ENCODE measurements at regions of chr12 and their contacts with region 1.

Region 1: DNA sequence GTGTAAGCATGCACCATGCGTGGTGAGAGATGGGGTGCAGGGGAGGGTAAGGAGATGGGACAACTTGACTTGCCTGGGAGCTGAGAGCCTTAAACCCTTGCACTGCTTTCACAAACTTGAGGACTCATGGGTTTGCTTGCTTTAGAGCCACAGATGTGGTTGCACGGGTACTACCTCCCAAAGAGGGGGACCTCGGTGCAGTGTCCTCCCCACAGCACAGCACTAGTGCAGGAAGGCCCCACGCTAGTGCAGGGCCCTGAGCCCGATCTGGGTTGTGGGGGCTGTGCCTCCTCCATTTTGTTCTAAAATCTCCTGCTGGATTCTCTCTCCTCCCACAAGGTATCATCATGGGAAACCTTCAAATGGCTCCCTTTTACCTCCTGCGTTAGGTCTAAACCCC is 11.2 kb downstream of the KRT72 start:
- DNase-seq: no peak
- ATAC-seq: no peak
- H3K4me3 ChIP-seq: no peak overlapping the region
- H3K4me3 Mint-ChIP-seq: no peak overlapping the region
- H3K27ac ChIP-seq: no peak overlapping the region
- H3K27ac Mint-ChIP-seq: peak overlapping the region in 6 of 9 donors; percentile 40 to 87 (median 68)
- H3K4me1 ChIP-seq: peaks cover 0 to 39% of the 10 kb centered on the region in 2 donors
- H3K4me1 Mint-ChIP-seq: peaks cover 23 to 76% (median 58%) of the 10 kb centered on the region in 7 donors
- H3K27me3 ChIP-seq: no peaks in the 10 kb centered on the region
- H3K27me3 Mint-ChIP-seq: peaks cover 0 to 10% (median 0%) of the 10 kb centered on the region in 5 donors

Region 2: DNA sequence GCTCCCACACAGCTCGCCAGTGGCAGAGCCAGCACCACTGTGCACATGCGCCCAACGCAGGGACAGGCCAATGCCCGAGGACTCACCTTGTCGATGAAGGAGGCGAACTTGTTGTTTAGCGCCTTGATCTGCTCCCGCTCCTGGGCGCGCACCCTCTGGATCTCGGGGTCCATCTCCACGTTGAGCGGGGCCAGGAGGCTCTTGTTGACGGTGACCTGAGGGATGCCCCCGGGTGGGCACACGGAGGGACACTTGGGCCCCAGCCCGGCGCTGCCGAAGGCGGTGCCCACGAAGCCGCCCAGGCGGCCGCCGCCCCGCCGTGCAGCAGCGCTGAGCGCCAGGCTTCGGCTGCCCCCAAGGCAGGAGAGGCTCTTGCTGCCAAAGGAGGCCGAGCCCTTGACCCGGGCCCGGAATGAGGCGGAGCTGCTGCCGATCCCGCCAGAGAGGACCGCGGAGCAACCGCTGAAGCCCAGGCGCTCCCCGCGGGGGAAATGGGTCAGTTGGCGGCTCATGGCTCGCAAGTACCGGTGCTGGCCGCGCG is 11.0 kb after region 1 on chr12 and contains the start of gene KRT72:
- CTCF ChIA-PET with region 1: interaction called, 29 read pairs
- POLR2A ChIA-PET with region 1: interaction called, 15 read pairs
- intact Hi-C with region 1: no loop called
- DNase-seq: peak in 1 of 9 donors; percentile 12
- ATAC-seq: no peak
- H3K4me3 ChIP-seq: no peak within 1 kb of the TSS
- H3K4me3 Mint-ChIP-seq: peak within 1 kb of the TSS in 6 of 10 donors; percentile 29 to 71 (median 64)
- H3K27ac ChIP-seq: no peak within 1 kb of the TSS
- H3K27ac Mint-ChIP-seq: peak within 1 kb of the TSS in 8 of 9 donors; percentile 37 to 97 (median 93)
- H3K4me1 ChIP-seq: peaks cover 0 to 40% of the 10 kb centered on the region in 2 donors
- H3K4me1 Mint-ChIP-seq: peaks cover 18 to 72% (median 61%) of the 10 kb centered on the region in 7 donors
- H3K27me3 ChIP-seq: no peaks in the 10 kb centered on the region
- H3K27me3 Mint-ChIP-seq: peaks cover 0 to 32% (median 0%) of the 10 kb centered on the region in 5 donors
- total RNA-seq, gene KRT72: 2.1 to 149 (median 104) TPM

Region 3: GRCh38 chr12:53220801-53221202 is 630.8 kb after region 1 on chr12:
- CTCF ChIA-PET with region 1: no interaction called
- POLR2A ChIA-PET with region 1: no interaction called
- intact Hi-C with region 1: no loop called
- DNase-seq: peak in 8 of 9 donors; percentile 51 to 85 (median 55)
- ATAC-seq: peak; percentile 79
- H3K4me3 ChIP-seq: peak overlapping the region; percentile 95
- H3K4me3 Mint-ChIP-seq: peak overlapping the region; percentile 94 to 100 (median 98)
- H3K27ac ChIP-seq: peak overlapping the region; percentile 78
- H3K27ac Mint-ChIP-seq: peak overlapping the region; percentile 84 to 98 (median 94)
- H3K4me1 ChIP-seq: peaks cover 55 to 63% of the 10 kb centered on the region in 2 donors
- H3K4me1 Mint-ChIP-seq: peaks cover 50 to 80% (median 77%) of the 10 kb centered on the region in 7 donors
- H3K27me3 ChIP-seq: no peaks in the 10 kb centered on the region
- H3K27me3 Mint-ChIP-seq: no peaks in the 10 kb centered on the region